AG04449 (cell line): ENCODE measurements at regions of chr12 and their contacts with region 1.

Region 1: DNA sequence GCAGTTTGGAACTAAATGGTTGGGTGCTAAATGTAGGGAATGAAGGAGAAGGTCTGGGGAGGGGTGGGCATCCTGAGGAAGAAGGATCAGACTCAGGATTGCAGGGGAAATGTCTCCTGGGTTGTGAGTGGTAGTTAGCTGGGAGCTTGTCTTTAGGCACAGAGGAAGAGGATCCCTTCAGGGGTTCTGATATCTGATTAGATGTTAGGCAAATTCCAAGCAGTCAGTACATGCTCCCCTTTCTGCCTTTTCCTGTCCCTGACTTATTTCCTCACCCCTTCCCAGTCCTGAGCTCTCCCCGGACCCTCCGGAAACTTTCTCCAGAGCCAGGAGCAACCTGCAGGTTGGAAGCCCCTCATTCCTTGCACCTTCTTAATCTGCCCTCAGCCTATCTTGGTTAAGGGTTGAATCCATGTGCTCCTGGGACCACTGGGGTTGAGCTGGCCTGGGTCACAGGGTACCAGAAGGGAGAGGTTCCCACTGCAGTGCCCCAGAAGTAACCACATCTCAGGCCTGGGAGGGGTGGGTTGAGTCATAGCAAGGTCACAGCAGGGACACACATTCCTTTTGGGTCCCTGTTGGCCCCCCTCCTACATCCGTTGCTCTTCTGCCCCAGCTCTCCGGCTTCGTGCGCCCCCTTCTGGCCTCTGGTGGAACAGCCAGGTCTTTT is 1.6 kb downstream of the IGFBP6 start:
- DNase-seq: peak; percentile 88
- H3K4me3 ChIP-seq: peak overlapping the region; percentile 73
- CTCF ChIP-seq: peak; percentile 92

Region 2: GRCh38 chr12:52551216-52551865 is 547.8 kb before region 1 on chr12:
- CTCF ChIA-PET with region 1: no interaction called
- POLR2A ChIA-PET with region 1: no interaction called
- DNase-seq: no peak
- H3K4me3 ChIP-seq: no peak overlapping the region
- CTCF ChIP-seq: no peak

Region 3: DNA sequence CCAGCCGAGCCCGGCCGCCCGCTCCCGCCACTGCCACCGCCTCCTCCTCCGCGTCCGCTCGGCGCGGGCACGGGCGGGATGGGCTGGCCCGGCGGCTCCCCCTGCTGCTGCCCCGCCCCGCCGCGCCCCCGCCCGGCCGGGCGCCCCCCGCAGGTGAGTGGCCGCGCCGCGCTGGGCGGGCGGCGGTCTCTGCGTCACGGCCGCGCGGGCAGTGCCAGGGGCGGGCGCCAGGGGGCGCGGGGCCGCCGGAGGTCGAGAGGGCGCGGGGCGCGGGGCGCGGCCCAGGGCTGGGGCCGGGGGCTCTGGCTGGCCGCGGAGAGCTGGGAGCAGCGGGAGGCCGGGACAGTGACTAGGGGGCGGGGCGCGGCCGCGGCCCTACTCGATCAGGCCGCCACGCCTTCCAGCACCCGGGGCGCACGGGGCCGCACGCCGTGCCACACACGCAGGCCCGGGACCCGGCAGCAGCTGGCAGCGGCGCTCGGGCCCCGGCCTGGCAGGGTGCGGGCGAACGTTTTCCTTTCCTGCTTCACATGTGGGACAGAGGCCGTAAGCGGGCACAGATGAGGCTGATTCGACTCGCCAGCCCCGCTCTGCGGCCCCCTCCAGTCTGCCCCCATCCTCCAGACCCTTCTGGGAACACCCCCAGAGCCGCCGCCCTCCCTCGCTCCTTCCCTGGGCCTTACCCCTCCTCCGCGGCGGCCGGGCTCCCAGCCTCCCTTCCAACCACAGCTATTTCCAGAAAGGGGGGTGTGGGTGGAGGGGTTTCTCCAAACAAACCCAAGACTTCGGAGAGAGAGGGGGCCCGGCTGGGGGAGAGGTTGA is 51.7 kb before region 1 on chr12:
- CTCF ChIA-PET with region 1: interaction called, 15 read pairs
- POLR2A ChIA-PET with region 1: interaction called, 24 read pairs
- DNase-seq: no peak
- H3K4me3 ChIP-seq: peak overlapping the region; percentile 83
- CTCF ChIP-seq: peak; percentile 19

Region 4: DNA sequence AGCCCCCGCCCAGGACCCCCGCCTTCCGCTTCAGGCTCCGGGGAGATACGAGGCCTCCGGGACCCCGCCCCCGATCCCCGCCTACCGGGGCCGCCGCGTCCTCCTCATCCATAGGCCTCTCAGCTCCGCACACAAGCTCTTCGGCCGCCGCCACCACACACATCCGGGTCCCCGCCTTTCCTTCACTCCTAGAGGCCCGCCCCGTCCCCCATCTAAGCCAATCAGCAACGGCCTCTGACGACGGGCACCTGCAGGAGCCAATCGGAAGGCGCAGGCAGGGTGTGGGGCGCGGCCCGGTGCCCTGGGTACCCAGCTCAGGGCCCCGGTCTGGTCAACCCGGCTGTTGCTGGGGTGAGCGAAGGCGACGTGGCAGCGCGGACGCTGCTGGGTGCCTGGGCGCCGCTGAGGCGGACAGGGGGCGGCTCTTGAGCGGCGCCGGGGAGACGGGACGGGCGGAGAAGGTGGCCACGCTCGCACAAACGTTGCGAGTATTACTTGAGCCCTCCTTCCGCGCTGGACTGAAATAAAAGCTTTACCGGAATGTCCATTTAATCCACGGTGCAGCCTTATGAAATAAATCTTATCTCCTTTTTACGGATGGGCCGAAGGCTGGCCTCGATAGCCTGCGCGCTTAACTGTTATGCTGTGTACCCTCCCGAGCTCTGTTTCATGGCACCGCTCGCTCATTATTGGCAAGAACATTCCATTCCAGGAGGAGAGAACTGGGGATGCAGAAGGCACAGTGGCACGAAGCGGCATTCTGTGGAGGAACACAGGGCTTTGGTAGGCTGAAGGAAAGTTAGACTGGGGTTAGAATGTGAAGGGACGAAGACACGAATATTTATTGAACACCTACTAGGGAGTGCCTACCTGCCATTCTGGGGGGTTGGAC is 19.6 kb before region 1 on chr12 and contains the start of gene SPRYD3:
- CTCF ChIA-PET with region 1: interaction called, 655 read pairs
- POLR2A ChIA-PET with region 1: interaction called, 86 read pairs
- DNase-seq: peak; percentile 80
- H3K4me3 ChIP-seq: peak within 1 kb of the TSS; percentile 76
- CTCF ChIP-seq: no peak

Region 5: DNA sequence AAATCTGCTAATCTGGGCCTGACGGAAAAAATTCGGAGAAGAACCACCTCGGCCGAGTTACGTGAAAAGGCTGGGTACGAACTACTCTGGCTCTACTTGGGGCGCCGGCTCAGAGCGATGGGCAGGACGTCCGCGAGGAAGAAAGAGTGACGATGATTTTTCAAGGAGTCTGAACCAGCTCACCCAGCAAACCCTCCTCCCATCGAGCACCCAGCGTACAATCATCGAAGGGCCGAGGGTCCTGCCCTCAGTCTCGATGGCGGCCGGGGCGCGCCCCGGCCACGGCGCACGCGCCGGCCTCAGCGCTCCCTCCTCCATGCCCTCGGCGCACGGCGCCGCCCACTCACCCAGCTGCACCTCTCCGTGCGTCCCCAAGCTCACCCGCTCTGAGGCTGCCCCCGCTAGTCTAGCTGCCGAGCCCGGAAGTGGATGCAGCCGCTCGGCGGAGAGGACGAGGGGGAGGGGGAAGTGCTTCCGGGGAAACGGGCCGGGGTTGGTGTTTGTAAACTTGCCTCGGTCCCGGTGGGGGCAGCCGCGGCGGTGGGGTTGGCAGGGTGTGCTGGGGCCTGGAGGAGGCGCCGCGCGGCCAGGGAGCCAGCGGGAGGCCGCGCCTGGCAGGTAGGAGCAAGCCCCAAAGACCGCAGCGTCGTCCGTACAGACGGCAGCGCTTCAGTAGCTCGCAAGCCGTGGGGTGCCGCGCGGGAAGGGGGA is 81.3 kb after region 1 on chr12 and contains the starts of genes CSAD and ZNF740:
- CTCF ChIA-PET with region 1: interaction called, 16 read pairs
- POLR2A ChIA-PET with region 1: interaction called, 9 read pairs
- DNase-seq: peak; percentile 70
- H3K4me3 ChIP-seq: peak within 1 kb of the TSS; percentile 84
- CTCF ChIP-seq: no peak